ENCODE measurements at regions of chr4 and their contacts with region 1.

Region 1: GRCh38 chr4:107989537-107990386 is at the start of gene HADH:
- DNase-seq: peak; percentile 97
- ATAC-seq: peak; percentile 100
- total RNA-seq, gene HADH: 260 TPM

Region 2: DNA sequence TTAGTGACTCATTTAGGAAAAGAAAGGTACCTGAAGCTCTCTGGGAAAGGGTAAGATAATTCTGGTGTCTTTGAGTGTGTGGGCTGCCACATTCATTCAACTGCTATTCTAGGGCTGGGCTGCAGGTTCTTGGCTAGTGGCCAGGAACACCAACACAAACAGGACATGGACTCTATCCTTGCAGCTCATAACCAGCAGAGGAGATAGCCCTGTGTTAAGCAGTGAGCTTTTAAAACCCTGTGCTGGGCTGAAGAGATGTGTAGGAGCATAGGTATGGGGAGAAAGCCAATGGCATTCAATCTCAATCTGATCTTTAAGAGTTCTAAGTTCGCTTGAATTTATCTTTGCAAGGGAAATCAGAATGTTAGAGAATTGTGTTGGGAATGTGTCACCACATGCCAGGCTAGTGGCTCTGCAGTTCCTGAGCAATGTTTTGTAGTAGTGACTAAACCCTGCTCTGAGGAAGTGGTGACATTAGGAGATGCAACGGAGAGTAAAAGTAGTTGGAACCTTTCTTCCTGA is 125.9 kb before region 1 on chr4:
- intact Hi-C with region 1: loop called (anchors 10 kb)
- DNase-seq: peak; percentile 69
- ATAC-seq: peak; percentile 86

Region 3: GRCh38 chr4:107930821-107931774 is 58.7 kb before region 1 on chr4 and contains the start of gene CYP2U1:
- intact Hi-C with region 1: loop called (anchors 2 kb)
- DNase-seq: peak; percentile 96
- ATAC-seq: peak; percentile 99
- total RNA-seq, gene CYP2U1: 7.1 TPM